ENCODE measurements at regions of chr1 and their contacts with region 1.

Region 1: DNA sequence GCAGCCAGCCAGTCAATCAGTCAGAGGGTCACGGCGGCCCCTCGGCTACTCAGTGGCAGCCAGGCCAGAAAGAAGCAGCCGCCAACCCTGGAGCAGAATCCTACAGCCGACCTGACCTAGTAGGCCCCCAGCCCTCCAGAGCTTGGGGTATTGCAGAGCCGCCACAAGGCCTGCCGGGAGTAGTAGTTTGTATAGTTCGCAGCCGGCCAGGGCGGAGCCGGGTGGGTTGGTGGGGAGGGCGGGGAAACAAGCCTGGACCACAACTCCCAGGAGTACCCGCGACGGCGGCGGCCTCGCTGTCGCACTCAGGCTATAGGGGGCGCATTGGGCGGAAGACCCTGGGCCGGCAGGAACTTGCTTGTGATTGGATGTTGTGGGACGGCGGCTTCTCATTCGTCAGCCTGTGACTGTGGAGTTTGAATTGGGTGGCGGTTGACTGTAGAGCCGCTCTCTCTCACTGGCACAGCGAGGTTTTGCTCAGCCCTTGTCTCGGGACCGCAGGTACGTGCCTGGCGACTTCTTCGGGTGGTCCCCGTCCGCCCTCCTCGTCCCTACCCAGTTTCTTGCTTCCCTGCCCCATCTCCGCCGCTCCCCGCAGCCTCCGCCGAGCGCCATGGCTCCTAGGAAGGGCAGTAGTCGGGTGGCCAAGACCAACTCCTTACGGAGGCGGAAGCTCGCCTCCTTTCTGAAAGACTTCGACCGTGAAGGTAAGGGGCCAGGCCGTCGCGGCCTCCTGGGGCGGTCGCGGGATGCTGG is at the start of gene CDCA8:
- DNase-seq: peak; percentile 99
- H3K4me3 Mint-ChIP-seq: peak within 1 kb of the TSS; percentile 97
- H3K27ac Mint-ChIP-seq: peak within 1 kb of the TSS; percentile 90
- H3K4me1 Mint-ChIP-seq: peaks cover 63% of the 10 kb centered on the region
- H3K27me3 Mint-ChIP-seq: no peaks in the 10 kb centered on the region
- total RNA-seq, gene CDCA8: 73.5 to 73.6 TPM

Region 2: GRCh38 chr1:37479255-37480124 is 212.8 kb before region 1 on chr1:
- CTCF ChIA-PET with region 1: interaction called, 3 read pairs
- POLR2A ChIA-PET with region 1: interaction called, 38 read pairs
- DNase-seq: peak; percentile 91
- H3K4me3 Mint-ChIP-seq: peak overlapping the region; percentile 98
- H3K27ac Mint-ChIP-seq: peak overlapping the region; percentile 99
- H3K4me1 Mint-ChIP-seq: peaks cover 50% of the 10 kb centered on the region
- H3K27me3 Mint-ChIP-seq: no peaks in the 10 kb centered on the region

Region 3: GRCh38 chr1:37553927-37554808 is 138.1 kb before region 1 on chr1 and contains the start of gene SNIP1:
- CTCF ChIA-PET with region 1: interaction called, 4 read pairs
- POLR2A ChIA-PET with region 1: interaction called, 17 read pairs
- DNase-seq: peak; percentile 94
- H3K4me3 Mint-ChIP-seq: peak within 1 kb of the TSS; percentile 90
- H3K27ac Mint-ChIP-seq: peak within 1 kb of the TSS; percentile 92
- H3K4me1 Mint-ChIP-seq: peaks cover 57% of the 10 kb centered on the region
- H3K27me3 Mint-ChIP-seq: no peaks in the 10 kb centered on the region
- total RNA-seq, gene SNIP1: 24.2 to 25.9 TPM

Region 4: DNA sequence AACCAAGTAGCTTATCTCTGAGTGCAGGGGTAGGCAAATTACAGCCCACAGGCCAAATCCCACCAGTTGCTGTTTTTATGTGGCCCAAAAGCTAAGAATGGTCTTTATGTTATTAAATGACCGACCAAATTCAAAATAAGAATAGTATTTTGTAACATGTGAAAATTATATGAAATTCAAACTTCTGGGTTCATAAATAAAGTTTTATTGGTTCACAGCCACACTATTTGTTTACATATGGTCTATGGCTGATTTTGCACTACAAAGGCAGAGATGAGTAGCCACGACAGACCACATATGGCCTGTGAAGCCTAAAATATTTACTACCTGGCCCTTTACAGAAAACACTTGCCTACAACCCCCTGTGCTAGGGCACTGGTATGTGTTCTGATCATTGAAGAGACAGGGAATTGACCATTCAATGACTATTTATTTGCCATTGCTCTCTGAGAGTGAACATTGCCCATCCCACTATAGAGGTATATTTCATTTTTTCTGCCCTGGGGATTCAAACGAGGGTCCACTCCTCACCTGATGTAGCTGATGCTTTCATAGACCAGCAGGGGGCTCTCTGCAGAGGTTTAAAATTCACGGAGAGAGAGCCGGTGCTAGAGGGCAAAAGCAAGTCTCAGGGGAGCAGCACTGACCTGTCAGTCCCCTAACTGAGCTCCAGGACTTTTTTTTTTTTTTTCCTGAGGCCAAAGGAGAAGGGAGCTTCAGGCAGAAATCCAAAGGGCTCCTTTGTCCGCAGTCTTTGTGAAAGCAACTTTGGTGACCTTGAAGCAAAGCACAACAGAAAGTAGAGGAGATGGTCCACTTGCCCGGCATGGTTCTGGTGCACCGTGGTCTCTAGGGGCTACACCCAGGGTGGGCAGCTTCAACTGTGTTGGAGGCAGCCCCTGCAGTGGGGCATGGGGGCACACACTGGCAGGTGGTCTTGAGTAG is 89.2 kb before region 1 on chr1:
- CTCF ChIA-PET with region 1: interaction called, 17 read pairs
- POLR2A ChIA-PET with region 1: interaction called, 4 read pairs
- DNase-seq: peak; percentile 34
- H3K4me3 Mint-ChIP-seq: no peak overlapping the region
- H3K27ac Mint-ChIP-seq: no peak overlapping the region
- H3K4me1 Mint-ChIP-seq: no peaks in the 10 kb centered on the region
- H3K27me3 Mint-ChIP-seq: peaks cover 12% of the 10 kb centered on the region

Region 5: DNA sequence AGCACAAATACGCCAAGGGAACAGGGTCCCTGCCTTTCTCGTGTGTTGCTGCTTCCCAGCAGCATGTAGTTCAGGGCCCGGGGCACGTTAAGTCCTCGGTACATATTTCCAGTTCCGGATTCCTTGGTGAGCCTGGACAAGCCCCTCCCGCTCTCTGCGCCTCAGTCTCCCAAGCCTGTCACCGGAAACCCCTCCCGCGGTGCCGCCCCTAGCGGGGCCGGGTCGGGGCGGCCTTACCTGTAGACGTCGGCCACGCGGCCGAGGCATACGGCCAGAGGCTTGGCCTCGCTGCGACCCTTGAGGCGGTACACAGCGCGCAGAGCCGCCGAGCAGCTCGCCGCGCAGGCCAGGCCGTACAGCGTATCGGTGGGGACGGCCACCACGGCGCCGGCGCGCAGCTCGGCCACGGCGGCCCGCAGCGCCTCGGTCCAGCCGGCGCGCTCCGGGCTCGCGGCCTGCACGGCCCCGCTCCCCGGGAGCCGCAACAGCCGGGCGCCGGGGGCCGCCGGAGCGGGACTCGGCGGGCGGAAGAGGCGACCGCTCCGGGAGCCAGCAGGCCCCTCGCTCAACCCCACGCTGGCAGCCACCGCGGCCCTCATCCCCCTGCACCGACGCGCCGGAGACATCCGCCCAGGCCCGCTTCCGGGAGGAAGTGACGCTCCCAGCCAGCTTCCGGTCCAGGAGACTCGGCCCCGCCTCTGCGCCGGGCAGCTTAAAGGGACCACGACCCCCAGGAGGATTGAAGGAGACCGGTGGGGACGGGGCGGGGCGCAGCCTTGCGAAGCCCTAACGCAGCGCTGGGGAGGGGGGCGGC is 115.5 kb after region 1 on chr1 and contains the starts of genes C1orf122 and YRDC:
- CTCF ChIA-PET with region 1: interaction called, 3 read pairs
- POLR2A ChIA-PET with region 1: interaction called, 19 read pairs
- DNase-seq: peak; percentile 94
- H3K4me3 Mint-ChIP-seq: peak within 1 kb of the TSS; percentile 98
- H3K27ac Mint-ChIP-seq: peak within 1 kb of the TSS; percentile 93
- H3K4me1 Mint-ChIP-seq: peaks cover 40% of the 10 kb centered on the region
- H3K27me3 Mint-ChIP-seq: no peaks in the 10 kb centered on the region
- total RNA-seq, gene C1orf122: 17.3 to 18.3 TPM
- total RNA-seq, gene YRDC: 16.4 to 16.8 TPM